ENCODE measurements at regions of chr14 and their contacts with region 1.

Region 1: DNA sequence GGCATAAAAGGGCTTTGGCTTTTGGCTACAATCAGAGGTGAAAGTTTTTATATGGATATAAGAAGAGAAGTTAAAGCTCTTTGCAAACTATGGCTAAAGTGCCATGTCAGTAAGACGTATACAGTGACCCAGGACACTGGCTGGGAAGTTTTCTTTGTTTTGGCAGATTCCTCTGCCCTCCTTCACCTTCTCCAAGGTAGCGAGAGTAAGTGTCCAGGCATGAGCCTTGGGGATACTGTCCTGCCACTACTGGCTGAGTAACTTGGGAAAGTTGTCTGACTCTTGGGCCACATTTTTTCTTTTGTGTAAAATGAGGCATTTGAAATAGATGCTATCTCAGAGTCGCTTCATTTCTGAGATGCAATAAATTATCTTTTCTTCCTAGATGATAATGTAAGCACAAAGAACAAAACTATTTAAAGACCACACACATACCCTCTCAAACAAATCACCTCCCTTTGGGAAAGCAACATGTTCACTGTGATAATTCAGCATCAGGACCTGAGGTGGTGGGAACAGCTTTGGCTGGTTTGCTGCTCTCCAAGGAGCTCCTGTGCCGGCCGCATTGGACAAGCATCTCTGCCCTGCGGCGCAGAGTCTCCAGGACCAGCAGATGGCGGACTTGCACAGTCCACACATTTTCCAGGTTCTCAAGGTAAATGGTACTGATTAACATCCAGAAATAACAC is 106.3 kb downstream of the PTCSC3 start:
- DNase-seq: peak; percentile 61
- H3K4me3 ChIP-seq: no peak overlapping the region
- H3K27ac ChIP-seq: peak overlapping the region; percentile 38
- H3K4me1 ChIP-seq: peaks cover 31% of the 10 kb centered on the region
- H3K27me3 ChIP-seq: no peaks in the 10 kb centered on the region
- CTCF ChIP-seq: peak; percentile 91 to 93

Region 2: GRCh38 chr14:35883677-35884293 is 186.4 kb before region 1 on chr14:
- CTCF ChIA-PET with region 1: interaction called, 11 read pairs
- dilution Hi-C with region 1: no loop called
- in situ Hi-C with region 1: loop called in 1 of 2 experiments (anchors 10 kb)
- intact Hi-C with region 1: loop called (anchors 1 kb)
- DNase-seq: no peak
- H3K4me3 ChIP-seq: no peak overlapping the region
- H3K27ac ChIP-seq: no peak overlapping the region
- H3K4me1 ChIP-seq: peaks cover 8% of the 10 kb centered on the region
- H3K27me3 ChIP-seq: no peaks in the 10 kb centered on the region
- CTCF ChIP-seq: peak; percentile 72 to 75

Region 3: DNA sequence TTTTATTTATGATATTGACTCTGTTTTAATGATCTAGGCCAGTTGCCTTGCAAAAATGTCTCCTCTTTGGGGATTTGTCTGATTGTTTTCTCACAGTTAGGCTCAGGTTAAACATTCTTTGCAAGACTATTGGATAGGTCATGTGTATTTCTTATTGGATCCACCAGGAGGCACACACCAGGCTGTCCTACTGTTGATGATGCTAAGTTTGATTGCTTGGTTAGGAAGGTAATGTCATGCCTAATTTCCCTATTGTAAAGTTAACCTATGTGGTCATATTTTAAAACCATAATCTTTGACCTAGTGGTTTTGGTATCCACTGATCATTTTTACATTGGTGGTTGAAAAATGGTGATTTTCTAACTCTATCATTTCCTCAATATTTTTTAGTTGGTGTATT is 107.0 kb before region 1 on chr14:
- CTCF ChIA-PET with region 1: no interaction called
- dilution Hi-C with region 1: no loop called
- in situ Hi-C with region 1: no loop called
- intact Hi-C with region 1: loop called (anchors 1 kb)
- DNase-seq: no peak
- H3K4me3 ChIP-seq: no peak overlapping the region
- H3K27ac ChIP-seq: no peak overlapping the region
- H3K4me1 ChIP-seq: no peaks in the 10 kb centered on the region
- H3K27me3 ChIP-seq: no peaks in the 10 kb centered on the region
- CTCF ChIP-seq: peak; percentile 48 to 57

Region 4: GRCh38 chr14:36207500-36207899 is 137.3 kb after region 1 on chr14:
- CTCF ChIA-PET with region 1: interaction called, 9 read pairs
- dilution Hi-C with region 1: no loop called
- in situ Hi-C with region 1: no loop called
- intact Hi-C with region 1: loop called (anchors 2 kb)
- DNase-seq: no peak
- H3K4me3 ChIP-seq: no peak overlapping the region
- H3K27ac ChIP-seq: no peak overlapping the region
- H3K4me1 ChIP-seq: no peaks in the 10 kb centered on the region
- H3K27me3 ChIP-seq: peaks cover 2% of the 10 kb centered on the region
- CTCF ChIP-seq: peak; percentile 35 to 52

Region 5: DNA sequence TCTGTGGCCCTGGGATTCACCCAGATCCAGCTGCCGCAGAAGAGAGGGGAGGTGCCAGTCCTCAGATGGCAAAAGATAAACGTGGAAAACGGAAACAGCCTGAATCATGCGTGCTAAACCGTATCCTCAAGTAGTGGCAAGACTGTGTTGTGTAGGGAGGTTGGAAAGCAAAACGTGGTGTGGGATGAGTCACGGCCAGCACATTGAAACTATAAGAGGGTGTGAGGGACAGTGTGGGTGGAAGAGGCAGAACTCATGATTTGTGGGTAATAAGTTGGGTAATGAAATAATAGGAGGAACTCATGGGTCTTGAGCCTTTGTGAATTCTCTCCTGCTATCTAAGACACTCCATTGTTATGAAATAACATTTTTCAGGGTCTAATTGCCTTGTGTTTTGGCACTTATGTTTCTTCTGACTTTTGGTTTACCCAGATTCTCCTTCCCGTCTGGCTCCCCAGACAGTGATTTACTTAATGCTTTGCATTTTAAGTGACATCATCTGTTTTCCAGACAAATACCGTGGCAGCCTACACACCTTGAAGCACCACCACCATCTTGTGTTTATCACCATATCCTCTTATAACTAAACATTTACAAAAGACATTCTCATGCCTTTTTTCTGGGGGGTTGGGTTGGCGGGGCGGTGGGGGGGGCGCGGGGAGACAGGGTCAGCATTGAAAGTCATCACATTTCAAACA is 168.6 kb after region 1 on chr14:
- CTCF ChIA-PET with region 1: interaction called, 5 read pairs
- dilution Hi-C with region 1: no loop called
- in situ Hi-C with region 1: no loop called
- intact Hi-C with region 1: loop called (anchors 10 kb)
- DNase-seq: peak; percentile 96
- H3K4me3 ChIP-seq: no peak overlapping the region
- H3K27ac ChIP-seq: peak overlapping the region; percentile 75
- H3K4me1 ChIP-seq: peaks cover 17% of the 10 kb centered on the region
- H3K27me3 ChIP-seq: no peaks in the 10 kb centered on the region
- CTCF ChIP-seq: no peak

Region 6: DNA sequence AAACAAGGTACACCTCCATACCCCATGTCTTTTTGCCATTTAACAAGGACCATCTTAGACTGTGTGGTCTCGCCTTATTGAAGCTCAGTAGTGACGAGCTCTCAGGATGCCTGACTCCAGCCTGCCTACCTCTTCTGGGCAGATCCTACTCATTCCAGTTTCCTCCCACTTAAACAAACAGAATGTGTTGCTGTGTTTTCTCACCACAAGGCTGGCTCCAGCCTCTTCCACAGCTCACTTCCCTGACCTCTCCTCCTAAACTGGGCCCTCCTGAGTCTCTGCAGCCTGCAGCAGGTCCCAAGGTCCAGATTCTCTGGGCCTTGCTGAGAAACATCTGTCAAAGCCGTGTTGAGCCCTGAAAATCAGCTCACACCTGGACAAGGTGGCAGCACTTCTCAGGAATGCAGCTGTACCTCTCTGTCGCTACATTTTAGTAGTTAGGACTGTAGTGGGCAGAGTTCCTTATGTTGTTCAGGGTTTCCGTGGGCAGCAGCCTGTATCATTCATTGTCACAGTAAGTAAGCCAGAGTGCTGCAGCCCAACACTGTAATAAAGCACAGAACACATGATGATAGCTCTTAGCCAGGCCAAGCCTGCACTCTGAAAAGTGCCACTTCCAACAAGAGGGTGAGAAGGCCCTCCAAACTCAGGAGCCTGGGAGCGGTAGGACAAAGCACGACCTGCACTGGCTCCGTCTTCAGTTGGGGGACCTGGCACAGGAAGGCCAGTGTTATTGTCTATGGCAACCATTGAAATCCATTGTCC is 381.3 kb after region 1 on chr14:
- CTCF ChIA-PET with region 1: no interaction called
- dilution Hi-C with region 1: no loop called
- in situ Hi-C with region 1: no loop called
- intact Hi-C with region 1: no loop called
- DNase-seq: no peak
- H3K4me3 ChIP-seq: no peak overlapping the region
- H3K27ac ChIP-seq: no peak overlapping the region
- H3K4me1 ChIP-seq: no peaks in the 10 kb centered on the region
- H3K27me3 ChIP-seq: no peaks in the 10 kb centered on the region
- CTCF ChIP-seq: no peak

Region 7: GRCh38 chr14:36520601-36521525 is 450.7 kb after region 1 on chr14:
- CTCF ChIA-PET with region 1: interaction called, 7 read pairs
- dilution Hi-C with region 1: no loop called
- in situ Hi-C with region 1: no loop called
- intact Hi-C with region 1: loop called (anchors 1 kb)
- DNase-seq: peak; percentile 30
- H3K4me3 ChIP-seq: peak overlapping the region in 2 of 3 experiments; percentile 1 to 4
- H3K27ac ChIP-seq: no peak overlapping the region
- H3K4me1 ChIP-seq: peaks cover 16% of the 10 kb centered on the region
- H3K27me3 ChIP-seq: peaks cover 86% of the 10 kb centered on the region
- CTCF ChIP-seq: peak in 1 of 2 donors; percentile 43

Region 8: GRCh38 chr14:36604757-36605505 is 534.8 kb after region 1 on chr14:
- CTCF ChIA-PET with region 1: interaction called, 5 read pairs
- dilution Hi-C with region 1: no loop called
- in situ Hi-C with region 1: no loop called
- intact Hi-C with region 1: loop called (anchors 1 kb)
- DNase-seq: peak; percentile 66
- H3K4me3 ChIP-seq: no peak overlapping the region
- H3K27ac ChIP-seq: no peak overlapping the region
- H3K4me1 ChIP-seq: no peaks in the 10 kb centered on the region
- H3K27me3 ChIP-seq: no peaks in the 10 kb centered on the region
- CTCF ChIP-seq: peak; percentile 82 to 87